Activated T-helper 1 cell treated with anti-CD3 and anti-CD28 coated beads, Interleukin-12 subunit alpha, Interleukin-12 subunit beta, Interleukin-2, Interleukin-4 antibody, amounts not matched to agents 30 ng/mL and 10 ng/mL and 1 ng/mL, durations not matched to agents 14 hours and 24 hours and 36 hours (primary cell): ENCODE measurements at regions of chr3 and their contacts with region 1.

Region 1: DNA sequence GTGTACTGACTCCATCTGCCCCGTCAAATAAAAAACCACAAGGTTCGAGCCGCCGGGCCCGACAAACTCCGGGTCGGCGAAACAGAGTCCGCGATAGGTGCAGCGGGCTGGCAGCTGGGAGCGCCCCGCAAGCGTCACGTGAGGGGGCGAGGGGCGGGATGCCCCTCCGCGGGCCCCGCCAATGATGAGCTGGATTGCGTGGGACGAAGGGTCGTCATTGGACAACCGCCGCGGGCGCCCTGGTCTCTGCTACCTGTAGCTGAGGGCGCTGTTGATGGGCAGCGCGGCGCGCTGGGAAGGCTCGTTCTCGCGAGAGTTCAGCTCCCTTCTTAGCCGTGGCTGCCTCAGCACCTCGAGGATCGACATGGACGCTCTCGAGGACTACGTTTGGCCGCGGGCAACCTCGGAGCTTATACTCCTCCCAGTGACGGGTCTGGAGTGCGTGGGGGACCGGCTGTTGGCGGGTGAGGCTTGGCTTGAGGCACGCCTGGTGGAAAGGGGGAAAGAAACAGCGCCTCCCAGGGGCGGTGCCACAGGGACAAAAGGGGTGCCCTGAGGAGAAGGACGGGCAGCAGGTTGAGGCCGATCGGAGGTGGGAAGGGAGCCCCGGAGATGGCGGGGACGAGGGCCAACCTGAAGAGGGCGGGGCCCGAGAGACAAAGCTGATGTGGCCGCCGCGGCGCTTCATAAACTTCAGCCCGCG is at the start of gene WDR6:
- DNase-seq: peak; percentile 96
- H3K4me3 Mint-ChIP-seq: peak within 1 kb of the TSS; percentile 98
- H3K27ac Mint-ChIP-seq: peak within 1 kb of the TSS; percentile 100
- H3K4me1 Mint-ChIP-seq: peaks cover 29% of the 10 kb centered on the region
- H3K27me3 Mint-ChIP-seq: no peaks in the 10 kb centered on the region
- total RNA-seq, gene WDR6: 143 and 145 TPM in 2 replicates

Region 2: DNA sequence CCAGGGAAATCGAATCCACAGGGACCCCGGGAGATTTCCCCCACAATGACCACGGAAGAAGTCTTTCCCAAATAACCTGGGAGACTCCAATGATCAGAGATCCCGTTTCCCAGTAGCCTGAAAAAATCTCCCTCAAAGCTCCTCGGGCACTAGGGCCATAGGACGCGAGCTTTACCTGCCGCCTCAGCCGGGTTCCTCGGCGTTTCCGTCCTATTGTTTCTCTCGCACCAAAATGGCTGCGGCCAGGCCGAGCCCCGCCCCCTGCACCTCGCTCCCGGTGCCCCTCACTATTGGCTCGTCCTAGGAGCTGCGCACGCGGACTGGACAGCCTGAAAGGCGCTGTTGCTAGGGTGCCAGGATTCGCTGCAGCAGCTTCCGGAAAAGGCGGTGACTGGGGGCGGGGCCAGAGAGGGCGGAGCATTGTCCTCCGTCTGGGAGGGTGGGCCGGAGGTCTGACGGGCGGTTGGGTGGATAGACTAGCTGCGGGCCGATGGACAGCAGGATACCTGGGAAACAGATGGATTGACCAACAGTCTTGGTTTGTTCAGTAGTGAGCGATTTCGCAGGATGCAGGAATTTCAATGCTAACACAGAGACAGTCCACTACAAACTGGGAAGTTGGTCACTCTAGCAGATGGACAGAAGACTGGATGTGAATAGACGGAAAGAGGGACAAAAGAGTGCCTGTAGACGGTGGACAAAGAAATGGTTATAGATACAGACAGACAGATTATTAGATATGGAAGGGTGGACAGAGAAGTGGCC is 290.1 kb before region 1 on chr3 and contains the start of gene IP6K2:
- intact Hi-C with region 1: loop called (anchors 5 kb)
- DNase-seq: peak; percentile 98
- H3K4me3 Mint-ChIP-seq: peak within 1 kb of the TSS; percentile 98
- H3K27ac Mint-ChIP-seq: peak within 1 kb of the TSS; percentile 94
- H3K4me1 Mint-ChIP-seq: peaks cover 29% of the 10 kb centered on the region
- H3K27me3 Mint-ChIP-seq: peaks cover 17% of the 10 kb centered on the region
- total RNA-seq, gene IP6K2: 59.9 and 61.0 TPM in 2 replicates

Region 3: DNA sequence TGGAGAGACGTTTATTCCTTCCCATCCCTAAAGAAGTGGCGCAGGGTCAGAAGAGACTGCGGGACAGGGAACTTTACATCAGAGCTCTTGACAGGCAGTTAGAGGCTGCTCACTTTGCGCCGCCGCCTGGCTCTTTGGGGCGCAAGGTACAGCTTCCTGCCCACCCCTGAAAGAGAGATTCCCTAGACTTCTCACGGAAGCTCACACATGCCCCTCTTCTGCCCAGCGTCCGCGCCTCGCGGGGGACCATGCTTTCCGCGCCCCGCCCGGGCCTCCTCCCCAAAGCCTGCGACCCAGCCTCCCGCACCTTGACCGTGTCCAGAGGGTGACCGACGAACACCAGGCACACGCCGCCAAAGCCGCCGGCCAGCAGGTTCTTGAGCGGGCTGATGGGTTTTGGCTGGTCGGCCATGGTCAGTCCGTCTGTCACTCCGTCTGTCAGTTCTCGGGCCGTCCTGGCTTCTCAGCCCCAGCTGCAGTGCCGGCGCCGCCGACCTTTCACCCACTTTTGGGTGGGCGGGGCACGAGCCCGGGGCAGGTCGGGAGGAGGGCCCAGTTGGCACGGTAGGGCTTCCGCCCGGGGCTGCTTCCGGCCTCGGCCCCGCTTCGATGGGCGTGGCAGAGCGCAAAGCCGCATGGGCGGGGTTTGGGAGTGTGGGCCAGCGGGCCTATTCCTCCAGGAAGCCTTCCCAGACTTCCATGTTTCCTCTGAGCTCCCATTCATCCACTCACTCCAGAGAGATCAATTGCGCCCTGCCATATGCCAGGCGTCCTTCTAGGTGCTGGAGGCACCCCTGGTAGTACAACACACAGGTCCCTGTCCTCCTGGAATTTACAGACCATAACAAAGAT is 108.6 kb before region 1 on chr3 and contains the start of gene SLC25A20:
- intact Hi-C with region 1: loop called (anchors 5 kb)
- DNase-seq: peak; percentile 92
- H3K4me3 Mint-ChIP-seq: peak within 1 kb of the TSS; percentile 94
- H3K27ac Mint-ChIP-seq: peak within 1 kb of the TSS; percentile 95
- H3K4me1 Mint-ChIP-seq: peaks cover 29% of the 10 kb centered on the region
- H3K27me3 Mint-ChIP-seq: no peaks in the 10 kb centered on the region
- total RNA-seq, gene SLC25A20: 15.9 and 17.4 TPM in 2 replicates

Region 4: GRCh38 chr3:48989796-48990635 is 17.2 kb before region 1 on chr3 and contains the start of gene P4HTM:
- intact Hi-C with region 1: loop called (anchors 1 kb)
- DNase-seq: peak; percentile 64
- H3K4me3 Mint-ChIP-seq: peak within 1 kb of the TSS; percentile 95
- H3K27ac Mint-ChIP-seq: peak within 1 kb of the TSS; percentile 91
- H3K4me1 Mint-ChIP-seq: peaks cover 49% of the 10 kb centered on the region
- H3K27me3 Mint-ChIP-seq: no peaks in the 10 kb centered on the region
- total RNA-seq, gene P4HTM: 34.5 and 36.8 TPM in 2 replicates

Region 5: DNA sequence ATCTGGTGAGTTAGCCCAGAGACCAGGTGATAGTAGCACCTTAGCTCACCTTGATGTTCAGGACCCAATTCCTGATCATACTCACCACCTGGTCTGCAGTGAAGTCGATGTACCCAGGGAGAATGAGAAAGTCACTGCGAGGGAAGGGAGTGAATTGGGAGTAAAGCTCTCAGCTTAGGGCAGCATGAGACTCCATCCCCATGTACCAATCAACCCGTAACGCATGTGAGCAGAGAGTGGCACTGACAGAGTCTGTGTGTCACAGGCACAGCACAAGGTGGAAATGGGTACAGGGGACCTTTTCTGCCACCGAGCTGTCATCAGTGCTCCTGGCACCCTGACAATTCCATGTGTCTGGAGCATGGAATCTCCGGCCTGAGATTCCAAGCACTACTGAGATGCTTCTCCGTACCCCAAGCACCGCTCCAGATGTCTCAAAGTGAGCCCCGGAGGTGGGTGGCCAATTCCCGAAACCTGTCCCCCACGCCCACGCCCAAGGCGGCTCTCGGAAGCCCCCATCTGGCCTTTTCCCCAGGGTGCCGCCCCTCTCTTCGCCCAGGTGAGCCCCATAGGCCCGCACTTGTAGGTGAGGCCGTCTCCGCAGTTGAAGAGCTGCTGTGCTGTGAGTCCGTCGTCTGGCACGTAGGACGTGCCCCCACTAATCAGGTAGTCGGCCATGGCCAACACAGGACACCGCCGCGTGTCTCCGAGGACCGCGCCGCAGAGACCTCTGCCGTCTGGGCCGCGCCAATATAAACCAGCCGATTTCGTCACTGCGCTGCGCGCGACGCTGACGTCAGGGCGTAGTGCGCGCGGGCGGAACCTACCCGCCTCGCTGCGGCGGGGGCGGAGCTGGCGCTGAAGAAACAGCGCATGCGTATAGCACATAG is 21.7 kb after region 1 on chr3 and contains the start of gene IMPDH2:
- intact Hi-C with region 1: loop called (anchors 1 kb)
- DNase-seq: peak; percentile 92
- H3K4me3 Mint-ChIP-seq: peak within 1 kb of the TSS; percentile 93
- H3K27ac Mint-ChIP-seq: peak within 1 kb of the TSS; percentile 90
- H3K4me1 Mint-ChIP-seq: peaks cover 50% of the 10 kb centered on the region
- H3K27me3 Mint-ChIP-seq: no peaks in the 10 kb centered on the region
- total RNA-seq, gene IMPDH2: 423 and 434 TPM in 2 replicates